ENCODE measurements at regions of chr5 and their contacts with region 1.

Region 1: DNA sequence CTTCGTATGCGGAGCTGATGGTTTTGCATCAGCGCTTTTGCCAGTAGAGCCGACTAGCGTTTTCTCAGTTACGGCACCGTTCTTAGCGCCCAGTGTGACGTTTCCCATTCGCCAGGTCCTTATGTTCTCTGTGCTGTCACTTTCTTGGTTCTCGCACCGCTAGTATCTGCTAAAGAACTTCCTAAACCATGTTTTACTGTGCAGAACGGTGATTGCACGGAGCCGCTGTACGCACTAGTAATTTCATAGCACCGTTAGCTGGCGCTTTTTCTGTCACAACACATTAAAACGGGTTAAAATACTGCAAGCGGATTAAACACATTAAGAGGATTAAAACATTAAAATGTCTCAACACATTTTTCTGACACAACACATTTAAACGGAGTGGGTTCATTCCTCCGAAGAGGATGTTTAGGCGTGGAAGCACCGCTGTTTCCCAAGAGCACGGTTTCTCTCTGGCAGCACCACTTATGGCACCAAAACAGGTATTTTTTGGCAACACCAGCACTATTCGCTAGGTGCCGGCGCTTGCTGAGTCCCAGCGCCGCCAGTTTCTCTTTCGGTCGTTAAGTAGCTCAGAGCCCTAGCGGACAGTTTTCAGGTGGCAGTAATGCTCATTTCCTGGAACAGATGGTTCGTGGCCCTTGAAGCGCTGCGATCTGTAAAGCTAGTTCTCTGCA is 20.4 kb downstream of the ANXA2R start:
- DNase-seq: peak; percentile 75
- ATAC-seq: peak; percentile 72
- H3K4me3 Mint-ChIP-seq: peak overlapping the region; percentile 97
- H3K27ac Mint-ChIP-seq: peak overlapping the region; percentile 100
- H3K4me1 Mint-ChIP-seq: peaks cover 27% of the 10 kb centered on the region
- H3K27me3 Mint-ChIP-seq: no peaks in the 10 kb centered on the region

Region 2: DNA sequence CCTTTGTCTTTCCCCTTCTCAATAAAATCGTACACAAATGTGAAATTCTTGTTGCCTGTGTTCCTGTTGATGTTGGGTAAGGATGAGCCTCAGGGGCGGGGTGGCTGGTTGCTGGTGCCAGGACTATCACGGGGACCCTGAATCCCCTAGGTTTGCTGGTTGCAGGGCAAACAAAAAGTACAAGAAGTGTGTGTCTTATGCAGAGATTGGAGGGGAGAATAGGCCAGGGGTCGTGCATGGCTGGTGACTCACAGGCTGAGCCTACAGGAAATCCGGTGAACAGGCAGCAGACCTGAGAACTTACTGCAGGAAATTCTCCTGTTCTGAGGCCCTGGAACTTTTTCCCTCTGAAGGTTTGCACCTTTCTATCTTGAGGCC is 14.8 kb after region 1 on chr5:
- POLR2A ChIA-PET with region 1: interaction called, 594 read pairs
- DNase-seq: no peak
- ATAC-seq: no peak
- H3K4me3 Mint-ChIP-seq: peak overlapping the region; percentile 52
- H3K27ac Mint-ChIP-seq: peak overlapping the region; percentile 65
- H3K4me1 Mint-ChIP-seq: peaks cover 33% of the 10 kb centered on the region
- H3K27me3 Mint-ChIP-seq: no peaks in the 10 kb centered on the region

Region 3: DNA sequence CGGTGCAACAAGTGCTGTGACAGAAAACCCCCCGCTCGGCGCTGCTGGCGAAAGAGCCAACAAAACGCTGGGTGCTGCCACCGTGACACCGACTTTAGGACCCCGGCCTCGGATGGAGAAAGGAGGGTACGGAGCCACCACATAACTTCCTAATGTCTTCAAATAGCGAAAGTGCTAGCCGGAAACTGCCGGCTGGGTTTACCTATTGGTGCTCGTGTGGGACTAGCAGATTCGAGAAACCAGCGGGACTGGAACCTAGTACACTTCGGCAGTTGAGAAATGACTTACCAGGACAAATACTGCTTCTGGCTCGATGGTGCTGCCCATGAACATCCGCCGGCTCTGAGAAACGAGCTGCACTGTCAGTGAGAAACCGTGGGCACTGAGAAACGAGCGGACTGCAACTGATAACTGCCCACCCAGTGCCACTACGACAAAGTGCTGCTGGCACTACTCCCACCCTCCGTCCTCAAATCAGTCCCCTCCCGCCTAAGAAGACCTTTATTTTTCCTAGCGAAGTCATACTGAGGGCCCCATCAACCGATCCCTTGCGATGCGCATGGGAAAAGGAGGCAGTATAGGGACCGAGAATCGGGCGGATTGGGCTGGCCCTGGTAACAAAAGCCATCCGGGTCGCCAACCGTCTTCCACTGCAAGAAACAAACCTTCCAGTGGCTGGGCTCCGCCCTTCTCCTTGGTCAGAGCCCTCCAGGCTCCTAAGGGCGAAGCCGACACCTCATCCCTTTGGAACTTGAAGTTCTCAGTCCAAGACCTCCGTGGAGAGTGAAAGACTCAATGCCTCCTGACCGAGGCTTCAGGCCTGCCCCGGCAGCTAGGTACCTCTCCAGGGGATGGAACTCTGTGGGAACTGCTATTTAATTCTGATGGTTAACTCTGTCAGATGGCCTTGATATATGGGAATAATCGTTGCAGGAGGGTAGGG is 47.3 kb after region 1 on chr5:
- POLR2A ChIA-PET with region 1: interaction called, 65 read pairs
- DNase-seq: peak; percentile 85
- ATAC-seq: peak; percentile 39
- H3K4me3 Mint-ChIP-seq: peak overlapping the region; percentile 99
- H3K27ac Mint-ChIP-seq: peak overlapping the region; percentile 100
- H3K4me1 Mint-ChIP-seq: peaks cover 30% of the 10 kb centered on the region
- H3K27me3 Mint-ChIP-seq: no peaks in the 10 kb centered on the region